ENCODE measurements at regions of chr12 and their contacts with region 1.

Region 1: DNA sequence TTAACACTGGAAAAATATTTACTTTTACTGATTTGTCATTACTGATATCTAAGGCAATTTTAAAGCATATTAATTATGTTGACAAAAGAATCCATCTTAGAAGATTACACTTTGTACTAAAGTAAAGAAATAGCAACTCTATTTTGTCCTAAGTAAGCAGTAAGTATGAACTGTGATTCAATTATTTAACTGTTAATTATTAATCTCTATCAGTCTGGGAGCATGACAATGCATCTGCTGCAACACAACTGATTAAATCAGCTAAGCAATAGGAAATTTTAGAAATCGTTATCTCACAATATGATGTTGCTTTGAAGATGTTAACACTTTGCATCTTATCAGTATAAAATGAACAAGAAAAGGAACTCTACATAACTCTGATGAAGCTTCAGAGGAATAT is 172.3 kb downstream of the DPY19L2 start:
- DNase-seq: no peak
- ATAC-seq: no peak
- H3K4me3 ChIP-seq: no peak overlapping the region
- H3K27ac ChIP-seq: no peak overlapping the region
- H3K4me1 ChIP-seq: no peaks in the 10 kb centered on the region
- H3K27me3 ChIP-seq: no peaks in the 10 kb centered on the region
- CTCF ChIP-seq: no peak
- POLR2A ChIP-seq: no peak
- RAD21 ChIP-seq: no peak

Region 2: GRCh38 chr12:63068857-63069442 is 427.0 kb before region 1 on chr12:
- CTCF ChIA-PET with region 1: no interaction called
- POLR2A ChIA-PET with region 1: no interaction called
- dilution Hi-C with region 1: no loop called
- in situ Hi-C with region 1: no loop called
- intact Hi-C with region 1: no loop called
- DNase-seq: peak; percentile 75
- ATAC-seq: peak; percentile 67
- H3K4me3 ChIP-seq: no peak overlapping the region
- H3K27ac ChIP-seq: no peak overlapping the region
- H3K4me1 ChIP-seq: no peaks in the 10 kb centered on the region
- H3K27me3 ChIP-seq: 0 out of 2 replicates have a peak, but pooled peaks cover 2% of the 10 kb centered on the region
- CTCF ChIP-seq: peak; percentile 70
- POLR2A ChIP-seq: no peak
- RAD21 ChIP-seq: peak; percentile 81

Region 3: GRCh38 chr12:63457857-63458256 is 38.1 kb before region 1 on chr12:
- CTCF ChIA-PET with region 1: no interaction called
- POLR2A ChIA-PET with region 1: no interaction called
- dilution Hi-C with region 1: no loop called
- in situ Hi-C with region 1: no loop called
- intact Hi-C with region 1: loop called (anchors 1 kb)
- DNase-seq: no peak
- ATAC-seq: no peak
- H3K4me3 ChIP-seq: no peak overlapping the region
- H3K27ac ChIP-seq: no peak overlapping the region
- H3K4me1 ChIP-seq: no peaks in the 10 kb centered on the region
- H3K27me3 ChIP-seq: no peaks in the 10 kb centered on the region
- CTCF ChIP-seq: no peak
- POLR2A ChIP-seq: no peak
- RAD21 ChIP-seq: no peak

Measured in IMR-90 (cell line).